ENCODE measurements at regions of chr12 and their contacts with region 1.

Region 1: DNA sequence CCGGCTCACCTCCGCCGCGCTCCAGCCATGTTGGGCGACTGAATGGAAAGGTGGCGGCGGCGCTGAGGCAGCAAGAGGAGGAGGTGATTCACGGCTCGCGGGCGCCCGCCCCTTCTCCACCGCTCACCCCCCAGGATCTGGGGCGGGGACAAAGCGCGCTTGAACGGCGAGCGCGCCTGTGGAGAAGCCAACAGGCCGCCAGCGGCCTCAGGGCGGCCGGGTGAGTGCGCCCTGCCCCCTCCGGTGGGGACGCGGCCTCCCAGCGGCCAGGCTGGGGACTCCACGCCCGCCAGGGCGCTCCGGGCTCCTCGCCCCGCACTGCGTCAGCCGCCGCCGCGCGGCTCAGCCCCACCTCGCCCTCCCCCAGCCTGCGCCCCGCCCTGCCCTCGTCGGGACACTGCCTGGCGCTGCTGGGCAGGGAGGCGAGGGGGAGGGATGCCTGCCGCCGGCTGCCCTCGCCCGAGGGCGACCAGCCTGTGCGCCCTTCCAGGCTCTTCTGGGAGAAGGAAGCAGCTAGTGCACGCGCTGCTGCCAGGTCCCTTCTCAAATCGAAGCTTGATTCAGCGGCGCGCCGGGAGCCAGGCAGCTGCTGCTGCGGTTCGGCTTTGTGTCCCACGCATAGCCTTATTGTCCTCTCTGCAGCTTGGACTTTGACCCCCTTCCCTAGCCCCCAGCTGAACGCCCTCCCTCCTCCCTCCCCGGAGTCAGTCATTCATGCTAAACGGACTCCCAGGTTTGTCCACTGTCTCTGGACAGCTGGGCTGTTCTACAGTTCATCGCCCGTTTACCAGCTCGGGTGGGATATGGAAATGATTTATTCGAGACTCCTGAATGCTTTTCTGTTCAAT is at the start of gene KIF21A:
- DNase-seq: peak; percentile 85 to 89
- ATAC-seq: peak; percentile 94 to 99 (median 96)
- H3K4me3 ChIP-seq: peak within 1 kb of the TSS; percentile 77 to 92 (median 86)
- H3K27ac ChIP-seq: peak within 1 kb of the TSS; percentile 66 to 93 (median 89)
- H3K4me1 ChIP-seq: peaks cover 3 to 24% (median 15%) of the 10 kb centered on the region in 9 donors
- H3K27me3 ChIP-seq: peaks cover 0 to 23% (median 0%) of the 10 kb centered on the region in 7 donors
- CTCF ChIP-seq: peak; percentile 39 to 75 (median 68)
- total RNA-seq, gene KIF21A: 42.3 to 71.8 (median 49.9) TPM

Region 2: GRCh38 chr12:39319187-39319586 is 124.1 kb before region 1 on chr12:
- intact Hi-C with region 1: loop called in 3 of 10 experiments (anchors 10 kb)
- DNase-seq: no peak
- ATAC-seq: no peak
- H3K4me3 ChIP-seq: no peak overlapping the region
- H3K27ac ChIP-seq: no peak overlapping the region
- H3K4me1 ChIP-seq: no peaks in the 10 kb centered on the region
- H3K27me3 ChIP-seq: no peaks in the 10 kb centered on the region
- CTCF ChIP-seq: no peak

Region 3: DNA sequence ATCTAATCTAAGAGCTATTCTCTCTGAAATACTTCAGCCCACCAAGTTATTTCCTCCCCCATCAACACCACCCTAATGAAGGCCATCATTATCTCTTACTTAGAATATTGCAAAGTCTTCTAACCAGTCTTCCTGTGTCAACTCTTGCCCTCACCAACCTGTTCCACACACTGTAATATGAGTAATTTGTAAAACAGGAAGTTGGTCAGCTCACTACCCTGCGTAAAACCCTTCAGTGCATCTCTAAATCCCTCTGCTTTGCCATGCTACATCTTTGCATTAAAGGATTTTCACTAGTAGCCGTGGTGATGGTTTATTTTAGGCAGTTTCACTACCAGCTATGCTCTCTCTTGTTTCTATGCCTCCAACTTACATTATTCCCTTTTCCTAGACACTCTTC is 70.4 kb before region 1 on chr12:
- intact Hi-C with region 1: loop called in 3 of 10 experiments (anchors 5 to 10 kb)
- DNase-seq: no peak
- ATAC-seq: peak in 4 of 8 donors; percentile 20 to 44 (median 28)
- H3K4me3 ChIP-seq: no peak overlapping the region
- H3K27ac ChIP-seq: no peak overlapping the region
- H3K4me1 ChIP-seq: peaks cover 0 to 17% (median 3%) of the 10 kb centered on the region in 9 donors
- H3K27me3 ChIP-seq: no peaks in the 10 kb centered on the region
- CTCF ChIP-seq: no peak

Region 4: DNA sequence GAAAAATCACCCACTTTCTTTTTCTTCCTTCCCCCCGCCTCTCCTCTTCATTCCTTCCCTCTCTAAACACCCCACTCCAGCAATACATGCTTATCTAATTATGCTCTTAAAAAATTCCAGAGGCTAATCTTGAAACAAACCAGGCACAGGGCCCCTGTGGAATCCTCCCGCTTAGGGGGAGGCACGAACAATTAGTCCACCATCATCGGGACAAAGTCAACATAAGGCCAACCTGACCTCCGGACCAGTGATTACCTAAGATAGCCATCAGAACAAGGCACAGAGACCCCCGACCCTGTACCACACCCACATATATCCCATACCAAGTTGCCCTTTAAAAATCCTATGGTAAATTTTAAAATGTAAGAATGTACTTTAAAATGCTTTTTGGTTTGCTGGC is 47.4 kb before region 1 on chr12:
- intact Hi-C with region 1: loop called in 2 of 10 experiments (anchors 5 kb)
- DNase-seq: peak in 1 of 2 donors; percentile 38
- ATAC-seq: peak; percentile 65 to 88 (median 82)
- H3K4me3 ChIP-seq: peak overlapping the region in 6 of 10 donors; percentile 11 to 36 (median 32)
- H3K27ac ChIP-seq: peak overlapping the region; percentile 36 to 79 (median 71)
- H3K4me1 ChIP-seq: peaks cover 0 to 78% (median 22%) of the 10 kb centered on the region in 9 donors
- H3K27me3 ChIP-seq: no peaks in the 10 kb centered on the region
- CTCF ChIP-seq: no peak

Region 5: GRCh38 chr12:39619660-39620433 is 176.5 kb after region 1 on chr12 and contains the start of gene ABCD2:
- intact Hi-C with region 1: loop called in 3 of 10 experiments (anchors 5 kb)
- DNase-seq: peak; percentile 66 to 69
- ATAC-seq: peak; percentile 92 to 95 (median 93)
- H3K4me3 ChIP-seq: peak within 1 kb of the TSS; percentile 11 to 67 (median 54)
- H3K27ac ChIP-seq: peak within 1 kb of the TSS; percentile 45 to 87 (median 78)
- H3K4me1 ChIP-seq: peaks cover 0 to 15% (median 3%) of the 10 kb centered on the region in 9 donors
- H3K27me3 ChIP-seq: no peaks in the 10 kb centered on the region
- CTCF ChIP-seq: no peak
- total RNA-seq, gene ABCD2: 5.4 to 10.1 (median 7.7) TPM